Naive thymus-derived CD4-positive, alpha-beta T cell (primary cell): ENCODE measurements at regions of chr14 and their contacts with region 1.

Region 1: DNA sequence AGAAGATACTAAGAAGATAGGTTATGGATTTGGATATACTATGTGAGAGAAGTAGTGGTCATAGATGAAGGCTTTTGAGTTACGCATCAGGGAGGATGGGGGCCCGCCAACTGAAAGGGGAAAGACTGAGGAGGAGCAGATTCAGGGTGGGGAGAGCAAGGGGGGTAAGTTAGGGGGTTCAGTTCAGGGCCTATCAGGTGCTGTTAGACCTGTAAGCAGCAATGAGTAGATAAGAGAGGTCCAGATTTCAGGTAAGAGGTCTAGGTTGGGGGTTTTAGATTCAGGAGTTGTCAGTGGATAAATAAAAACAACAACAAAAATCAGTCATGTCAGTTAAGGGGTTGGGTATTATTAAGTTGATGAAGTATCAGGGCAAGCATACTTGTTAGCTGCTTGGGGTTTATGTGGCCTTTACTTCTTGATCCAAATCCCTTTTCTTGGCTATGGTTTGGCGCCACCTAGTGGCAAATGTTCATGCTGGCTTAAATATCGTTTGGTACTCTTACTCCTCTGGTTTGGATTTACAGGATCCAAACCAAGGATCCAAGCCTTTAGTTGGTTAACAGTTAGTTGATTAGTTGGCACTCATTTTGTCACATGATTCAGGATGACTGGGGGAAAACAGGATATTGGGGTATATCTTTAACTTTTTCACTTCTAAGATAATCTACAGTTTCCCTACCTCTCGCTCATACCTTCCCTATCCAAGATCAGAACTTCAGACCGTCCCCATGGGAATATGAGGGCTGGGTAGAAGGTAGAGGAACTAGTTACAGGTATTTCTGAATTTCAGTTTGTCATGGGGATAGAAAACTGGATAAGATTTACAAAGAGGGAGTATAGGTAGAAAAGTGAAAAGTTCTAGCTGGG is 65.1 kb downstream of the PCNX1 start:
- DNase-seq: peak; percentile 64 to 80 (median 75)
- ATAC-seq: peak; percentile 91
- H3K4me3 ChIP-seq: no peak overlapping the region
- H3K4me3 Mint-ChIP-seq: peak overlapping the region in 2 of 10 donors; percentile 6 to 51
- H3K27ac ChIP-seq: peak overlapping the region; percentile 54
- H3K27ac Mint-ChIP-seq: peak overlapping the region in 8 of 9 donors; percentile 38 to 89 (median 77)
- H3K4me1 ChIP-seq: peaks cover 9 to 13% of the 10 kb centered on the region in 2 donors
- H3K4me1 Mint-ChIP-seq: peaks cover 13 to 70% (median 54%) of the 10 kb centered on the region in 7 donors
- H3K27me3 ChIP-seq: no peaks in the 10 kb centered on the region
- H3K27me3 Mint-ChIP-seq: no peaks in the 10 kb centered on the region

Region 2: DNA sequence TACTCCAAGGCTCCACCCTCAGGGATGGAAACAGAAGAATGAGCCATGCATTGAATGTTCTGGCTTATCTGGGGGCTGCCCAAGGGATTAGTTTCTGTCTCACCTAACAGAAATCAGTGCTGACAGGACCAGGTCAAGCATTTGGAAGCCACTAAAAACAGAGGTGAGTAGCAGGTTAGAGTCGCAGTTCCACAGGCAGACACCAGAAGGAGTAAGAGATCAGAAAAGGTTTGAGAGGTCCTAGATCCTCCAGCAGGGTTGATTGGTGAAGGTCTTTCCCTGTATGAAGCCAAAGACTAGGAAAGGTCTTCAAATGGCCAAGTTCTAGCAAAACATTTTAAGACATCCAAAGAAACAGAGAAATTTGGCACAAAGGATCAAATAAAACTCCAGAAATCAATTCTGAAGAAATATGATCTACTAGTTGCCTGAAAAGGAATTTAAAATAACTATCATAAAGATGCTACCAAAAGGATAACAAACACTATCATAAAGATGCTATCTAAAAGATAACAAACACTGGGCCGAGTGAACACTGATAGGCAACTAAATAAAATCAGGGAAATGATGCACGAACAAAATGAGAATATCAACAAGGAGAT is 350.1 kb before region 1 on chr14:
- CTCF ChIA-PET with region 1: no interaction called
- POLR2A ChIA-PET with region 1: no interaction called
- intact Hi-C with region 1: loop called (anchors 1 to 2 kb)
- DNase-seq: peak in 8 of 9 donors; percentile 42 to 66 (median 56)
- ATAC-seq: peak; percentile 85
- H3K4me3 ChIP-seq: no peak overlapping the region
- H3K4me3 Mint-ChIP-seq: peak overlapping the region in 1 of 10 donors; percentile 11
- H3K27ac ChIP-seq: no peak overlapping the region
- H3K27ac Mint-ChIP-seq: peak overlapping the region in 3 of 9 donors; percentile 2 to 29 (median 17)
- H3K4me1 ChIP-seq: no peaks in the 10 kb centered on the region
- H3K4me1 Mint-ChIP-seq: peaks cover 0 to 10% (median 6%) of the 10 kb centered on the region in 7 donors
- H3K27me3 ChIP-seq: no peaks in the 10 kb centered on the region
- H3K27me3 Mint-ChIP-seq: peaks cover 0 to 20% (median 0%) of the 10 kb centered on the region in 5 donors

Region 3: DNA sequence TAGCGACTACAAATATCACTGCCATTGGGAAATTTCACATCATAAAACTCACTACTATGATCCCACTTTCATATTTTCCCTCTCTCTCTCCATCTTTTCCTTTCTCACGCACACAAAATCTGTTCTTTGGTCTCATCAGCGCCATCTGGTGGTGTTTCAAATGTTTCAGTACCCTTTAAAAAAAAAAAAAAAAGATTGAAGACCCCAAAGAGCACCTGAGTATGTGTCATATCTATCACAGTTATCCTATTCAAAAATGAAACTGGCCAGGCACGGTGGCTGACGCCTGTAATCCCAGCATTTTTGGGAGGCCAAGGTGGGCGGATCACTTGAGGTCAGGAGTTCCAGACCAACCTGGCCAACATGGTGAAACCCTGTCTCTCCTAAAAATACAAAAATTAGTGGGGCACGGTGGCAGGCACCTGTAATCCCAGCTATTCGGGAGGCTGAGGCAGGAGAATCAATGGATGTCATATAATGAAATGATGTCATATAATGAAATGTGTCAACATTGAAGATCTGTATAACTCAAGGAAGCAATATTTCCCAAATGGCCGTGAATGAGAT is 258.2 kb before region 1 on chr14:
- CTCF ChIA-PET with region 1: no interaction called
- POLR2A ChIA-PET with region 1: no interaction called
- intact Hi-C with region 1: loop called in 1 of 2 experiments (anchors 1 kb)
- DNase-seq: peak in 7 of 9 donors; percentile 24 to 62 (median 43)
- ATAC-seq: no peak
- H3K4me3 ChIP-seq: no peak overlapping the region
- H3K4me3 Mint-ChIP-seq: peak overlapping the region in 2 of 10 donors; percentile 38 to 53
- H3K27ac ChIP-seq: no peak overlapping the region
- H3K27ac Mint-ChIP-seq: no peak overlapping the region
- H3K4me1 ChIP-seq: peaks cover 2 to 4% of the 10 kb centered on the region in 2 donors
- H3K4me1 Mint-ChIP-seq: peaks cover 3 to 7% (median 5%) of the 10 kb centered on the region in 7 donors
- H3K27me3 ChIP-seq: no peaks in the 10 kb centered on the region
- H3K27me3 Mint-ChIP-seq: peaks cover 0 to 9% (median 4%) of the 10 kb centered on the region in 5 donors

Region 4: DNA sequence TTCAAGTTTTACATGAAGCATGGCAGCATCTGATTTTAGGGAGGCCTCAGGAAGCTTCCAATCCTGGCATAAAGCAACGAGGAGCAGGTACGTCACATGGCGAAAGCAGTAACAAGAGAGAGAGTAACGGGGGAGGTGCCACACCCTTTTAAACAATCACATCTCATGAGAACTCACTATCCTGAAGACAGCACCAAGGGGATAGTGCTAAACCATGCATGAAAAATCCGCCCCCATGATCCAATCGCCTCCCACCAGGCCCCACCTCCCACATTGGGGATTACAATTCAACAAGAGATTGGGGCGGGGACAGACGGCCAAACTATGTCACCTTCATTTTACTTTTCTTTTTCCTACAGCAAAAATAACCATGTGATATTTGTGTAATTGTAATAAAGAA is 155.8 kb before region 1 on chr14:
- CTCF ChIA-PET with region 1: interaction called, 14 read pairs
- POLR2A ChIA-PET with region 1: interaction called, 3 read pairs
- intact Hi-C with region 1: loop called (anchors 1 kb)
- DNase-seq: no peak
- ATAC-seq: no peak
- H3K4me3 ChIP-seq: no peak overlapping the region
- H3K4me3 Mint-ChIP-seq: no peak overlapping the region
- H3K27ac ChIP-seq: no peak overlapping the region
- H3K27ac Mint-ChIP-seq: no peak overlapping the region
- H3K4me1 ChIP-seq: peaks cover 0 to 8% of the 10 kb centered on the region in 2 donors
- H3K4me1 Mint-ChIP-seq: peaks cover 5 to 22% (median 11%) of the 10 kb centered on the region in 7 donors
- H3K27me3 ChIP-seq: no peaks in the 10 kb centered on the region
- H3K27me3 Mint-ChIP-seq: peaks cover 6 to 21% (median 6%) of the 10 kb centered on the region in 5 donors

Region 5: GRCh38 chr14:70873627-70874026 is 98.7 kb before region 1 on chr14:
- CTCF ChIA-PET with region 1: interaction called, 3 read pairs
- POLR2A ChIA-PET with region 1: no interaction called
- intact Hi-C with region 1: loop called in 1 of 2 experiments (anchors 1 kb)
- DNase-seq: peak in 3 of 9 donors; percentile 19 to 30 (median 30)
- ATAC-seq: peak; percentile 74
- H3K4me3 ChIP-seq: no peak overlapping the region
- H3K4me3 Mint-ChIP-seq: peak overlapping the region in 3 of 10 donors; percentile 2 to 68 (median 33)
- H3K27ac ChIP-seq: no peak overlapping the region
- H3K27ac Mint-ChIP-seq: peak overlapping the region in 6 of 9 donors; percentile 4 to 97 (median 39)
- H3K4me1 ChIP-seq: peaks cover 11 to 16% of the 10 kb centered on the region in 2 donors
- H3K4me1 Mint-ChIP-seq: peaks cover 6 to 25% (median 15%) of the 10 kb centered on the region in 7 donors
- H3K27me3 ChIP-seq: no peaks in the 10 kb centered on the region
- H3K27me3 Mint-ChIP-seq: no peaks in the 10 kb centered on the region

Region 6: GRCh38 chr14:70887207-70887681 is 85.1 kb before region 1 on chr14:
- CTCF ChIA-PET with region 1: no interaction called
- POLR2A ChIA-PET with region 1: no interaction called
- intact Hi-C with region 1: no loop called
- DNase-seq: peak in 1 of 9 donors; percentile 6
- ATAC-seq: peak; percentile 49
- H3K4me3 ChIP-seq: peak overlapping the region; percentile 34
- H3K4me3 Mint-ChIP-seq: peak overlapping the region; percentile 39 to 81 (median 70)
- H3K27ac ChIP-seq: peak overlapping the region; percentile 52
- H3K27ac Mint-ChIP-seq: peak overlapping the region; percentile 53 to 91 (median 87)
- H3K4me1 ChIP-seq: peaks cover 62 to 66% of the 10 kb centered on the region in 2 donors
- H3K4me1 Mint-ChIP-seq: peaks cover 60 to 97% (median 76%) of the 10 kb centered on the region in 7 donors
- H3K27me3 ChIP-seq: no peaks in the 10 kb centered on the region
- H3K27me3 Mint-ChIP-seq: no peaks in the 10 kb centered on the region

Region 7: DNA sequence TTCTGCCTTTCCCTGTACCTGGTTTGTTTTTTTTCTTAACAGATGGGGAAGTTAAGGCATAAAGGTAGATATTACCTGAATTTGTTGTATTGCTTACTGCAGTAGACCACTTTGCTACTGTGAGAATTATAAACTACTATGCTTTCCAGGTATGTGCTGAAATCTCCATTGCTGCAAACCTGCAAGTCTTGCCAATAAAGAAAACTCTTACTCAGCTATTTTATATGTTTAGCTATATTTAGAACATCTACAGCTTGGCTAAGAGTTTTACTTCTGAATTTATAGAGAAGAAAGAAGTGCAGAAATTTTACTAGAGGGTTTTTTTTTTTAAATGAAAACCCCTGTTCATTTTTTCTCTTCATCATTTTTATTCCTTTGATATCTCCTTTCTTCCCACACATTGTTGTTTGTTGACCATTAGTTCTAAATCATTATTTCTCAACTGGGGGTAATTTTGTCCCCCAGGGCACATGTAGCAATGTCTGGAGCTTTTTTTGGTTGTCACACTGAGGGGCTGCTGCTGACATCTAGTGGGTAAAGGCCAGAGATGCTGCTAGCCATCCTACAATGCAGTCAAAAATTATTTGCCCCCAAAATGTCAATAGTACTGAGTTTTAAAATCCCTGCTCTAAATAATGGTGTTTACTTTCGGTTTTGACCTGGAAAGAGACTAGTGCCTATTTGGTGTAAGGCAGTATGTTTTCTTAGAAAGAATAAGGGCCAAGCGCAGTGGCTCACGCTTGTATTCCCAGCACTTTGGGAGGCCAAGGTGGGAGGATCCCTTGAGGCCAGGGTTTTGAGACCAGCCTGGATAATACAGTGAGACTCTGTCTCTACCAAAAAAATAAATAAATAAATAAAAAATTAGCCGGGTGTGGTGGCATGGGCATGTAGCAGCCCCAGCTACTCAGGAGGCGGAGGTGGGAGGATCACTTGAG is 16.5 kb before region 1 on chr14:
- CTCF ChIA-PET with region 1: interaction called, 4 read pairs
- POLR2A ChIA-PET with region 1: interaction called, 3 read pairs
- intact Hi-C with region 1: loop called in 1 of 2 experiments (anchors 1 kb)
- DNase-seq: peak in 7 of 9 donors; percentile 29 to 67 (median 52)
- ATAC-seq: peak; percentile 80
- H3K4me3 ChIP-seq: no peak overlapping the region
- H3K4me3 Mint-ChIP-seq: peak overlapping the region in 2 of 10 donors; percentile 12 to 38
- H3K27ac ChIP-seq: no peak overlapping the region
- H3K27ac Mint-ChIP-seq: peak overlapping the region in 5 of 9 donors; percentile 8 to 85 (median 13)
- H3K4me1 ChIP-seq: peaks cover 18 to 19% of the 10 kb centered on the region in 2 donors
- H3K4me1 Mint-ChIP-seq: peaks cover 25 to 53% (median 40%) of the 10 kb centered on the region in 7 donors
- H3K27me3 ChIP-seq: no peaks in the 10 kb centered on the region
- H3K27me3 Mint-ChIP-seq: no peaks in the 10 kb centered on the region

Region 8: GRCh38 chr14:71011479-71011878 is 39.1 kb after region 1 on chr14:
- CTCF ChIA-PET with region 1: interaction called, 3 read pairs
- POLR2A ChIA-PET with region 1: no interaction called
- intact Hi-C with region 1: loop called in 1 of 2 experiments (anchors 5 kb)
- DNase-seq: peak in 3 of 9 donors; percentile 16 to 24 (median 21)
- ATAC-seq: no peak
- H3K4me3 ChIP-seq: no peak overlapping the region
- H3K4me3 Mint-ChIP-seq: peak overlapping the region in 3 of 10 donors; percentile 6 to 54 (median 36)
- H3K27ac ChIP-seq: no peak overlapping the region
- H3K27ac Mint-ChIP-seq: peak overlapping the region in 6 of 9 donors; percentile 19 to 72 (median 48)
- H3K4me1 ChIP-seq: peaks cover 0 to 24% of the 10 kb centered on the region in 2 donors
- H3K4me1 Mint-ChIP-seq: peaks cover 12 to 67% (median 58%) of the 10 kb centered on the region in 7 donors
- H3K27me3 ChIP-seq: no peaks in the 10 kb centered on the region
- H3K27me3 Mint-ChIP-seq: no peaks in the 10 kb centered on the region